ENCODE measurements at regions of chr2 and their contacts with region 1.

Region 1: DNA sequence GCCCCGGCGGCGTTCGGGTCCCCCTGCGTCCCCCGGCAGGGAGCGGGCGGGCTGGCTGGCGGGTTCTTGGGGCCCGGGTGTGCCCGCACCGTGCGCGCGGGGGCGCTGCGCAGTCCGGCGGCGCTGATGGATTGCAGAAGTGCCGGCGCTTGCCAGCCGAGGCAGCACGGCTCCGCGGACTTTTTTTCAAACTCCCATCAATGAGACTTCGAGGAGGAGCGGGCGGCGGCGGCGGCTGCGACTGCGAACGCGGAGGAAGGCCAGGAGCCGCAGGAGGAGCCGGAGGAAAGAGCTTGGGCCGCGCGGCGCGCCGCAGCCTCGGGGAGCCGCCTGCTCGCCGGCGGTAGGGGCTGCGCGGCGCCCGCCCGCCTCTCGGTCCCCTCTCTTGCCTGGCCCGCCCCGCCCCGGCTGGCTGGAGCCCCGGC is at the start of gene GLI2:
- DNase-seq: peak; percentile 65
- ATAC-seq: peak; percentile 87
- H3K4me3 ChIP-seq: peak within 1 kb of the TSS; percentile 60 to 64
- H3K27ac ChIP-seq: peak within 1 kb of the TSS; percentile 45; the same call in 1 of the 2 replicates
- H3K4me1 ChIP-seq: peaks cover 11 to 34% of the 10 kb centered on the region in 2 experiments
- H3K27me3 ChIP-seq: peaks cover 8% of the 10 kb centered on the region; the same call in 1 of the 2 replicates
- CTCF ChIP-seq: peak; percentile 64 to 88 (median 70)
- POLR2A ChIP-seq: no peak
- RAD21 ChIP-seq: peak; percentile 71
- total RNA-seq, gene GLI2: 3.4 TPM

Region 2: GRCh38 chr2:120625865-120626560 is 109.7 kb before region 1 on chr2:
- CTCF ChIA-PET with region 1: no interaction called
- POLR2A ChIA-PET with region 1: no interaction called
- RAD21 ChIA-PET with region 1: no interaction called
- intact Hi-C with region 1: no loop called
- DNase-seq: no peak
- ATAC-seq: no peak
- H3K4me3 ChIP-seq: no peak overlapping the region
- H3K27ac ChIP-seq: no peak overlapping the region
- H3K4me1 ChIP-seq: no peaks in the 10 kb centered on the region
- H3K27me3 ChIP-seq: no peaks in the 10 kb centered on the region
- CTCF ChIP-seq: no peak
- POLR2A ChIP-seq: no peak
- RAD21 ChIP-seq: no peak

Region 3: DNA sequence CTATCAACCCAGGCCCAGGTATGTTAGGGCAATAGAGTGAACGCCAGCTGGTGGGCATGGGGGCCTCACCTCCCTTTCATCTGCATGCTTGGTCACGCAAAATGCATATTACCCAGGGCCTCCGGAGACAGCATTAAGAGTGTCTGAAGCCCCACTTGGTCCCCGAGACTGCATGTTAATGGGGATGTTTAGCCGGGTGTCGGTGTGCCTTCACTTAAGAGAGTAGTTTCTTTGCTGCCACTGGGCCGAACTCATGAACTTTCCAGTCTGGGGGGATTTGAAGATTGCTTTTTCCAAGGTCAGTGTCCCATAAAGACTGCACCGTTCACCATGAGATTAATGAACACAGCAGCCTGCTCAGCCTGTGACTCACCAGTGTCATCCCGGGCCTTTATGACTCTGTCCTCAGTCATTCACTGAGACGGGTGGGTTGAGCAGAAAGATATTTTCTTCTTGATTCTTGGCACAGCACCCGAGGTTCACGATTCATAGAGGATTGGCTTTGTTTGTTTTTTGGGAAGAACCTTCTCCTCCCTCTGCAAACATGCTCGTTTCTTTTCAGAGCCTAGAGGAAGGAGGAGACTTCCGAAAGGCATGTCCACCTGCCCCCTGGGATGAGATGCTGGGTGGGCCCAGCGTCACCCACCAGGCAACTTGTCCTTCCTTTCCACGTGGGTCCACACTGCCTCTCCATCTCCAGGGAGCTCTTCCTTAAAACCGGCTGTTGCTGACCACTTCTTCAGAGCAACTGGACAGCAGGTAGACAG is 199.0 kb after region 1 on chr2:
- CTCF ChIA-PET with region 1: no interaction called
- POLR2A ChIA-PET with region 1: no interaction called
- RAD21 ChIA-PET with region 1: no interaction called
- intact Hi-C with region 1: loop called (anchors 5 kb)
- DNase-seq: peak; percentile 69
- ATAC-seq: peak; percentile 86
- H3K4me3 ChIP-seq: peak overlapping the region; percentile 21 to 47
- H3K27ac ChIP-seq: peak overlapping the region; percentile 64
- H3K4me1 ChIP-seq: peaks cover 30 to 63% of the 10 kb centered on the region in 2 experiments
- H3K27me3 ChIP-seq: peaks cover 8% of the 10 kb centered on the region; the same call in 1 of the 2 replicates
- CTCF ChIP-seq: no peak
- POLR2A ChIP-seq: no peak
- RAD21 ChIP-seq: 0 out of 2 replicates have a peak, but pooled peaks have one; percentile 14

Region 4: GRCh38 chr2:121071034-121071504 is 335.3 kb after region 1 on chr2:
- CTCF ChIA-PET with region 1: interaction called, 4 read pairs
- POLR2A ChIA-PET with region 1: interaction called, 29 read pairs
- RAD21 ChIA-PET with region 1: no interaction called
- intact Hi-C with region 1: loop called (anchors 2 kb)
- DNase-seq: peak; percentile 19
- ATAC-seq: peak; percentile 64
- H3K4me3 ChIP-seq: no peak overlapping the region
- H3K27ac ChIP-seq: no peak overlapping the region
- H3K4me1 ChIP-seq: peaks cover 5 to 30% of the 10 kb centered on the region in 2 experiments; a peak in 3 of 4 replicates
- H3K27me3 ChIP-seq: no peaks in the 10 kb centered on the region
- CTCF ChIP-seq: peak; percentile 92 to 96 (median 94)
- POLR2A ChIP-seq: no peak
- RAD21 ChIP-seq: peak; percentile 96